GM12878 (cell line): ENCODE measurements at regions of chr2 and their contacts with region 1.

Region 1: GRCh38 chr2:130873700-130874346 is 37.1 kb downstream of the ARHGEF4 start:
- DNase-seq: peak; percentile 17
- ATAC-seq: peak; percentile 87
- H3K4me3 ChIP-seq: no peak overlapping the region
- H3K27ac ChIP-seq: no peak overlapping the region
- H3K4me1 ChIP-seq: no peaks in the 10 kb centered on the region
- H3K27me3 ChIP-seq: no peaks in the 10 kb centered on the region; a peak in 2 of 4 replicates
- CTCF ChIP-seq: peak; percentile 70 to 83 (median 78); a peak in 5 of 6 replicates
- EP300 ChIP-seq: no peak
- POLR2A ChIP-seq: no peak
- RAD21 ChIP-seq: peak; percentile 73

Region 2: DNA sequence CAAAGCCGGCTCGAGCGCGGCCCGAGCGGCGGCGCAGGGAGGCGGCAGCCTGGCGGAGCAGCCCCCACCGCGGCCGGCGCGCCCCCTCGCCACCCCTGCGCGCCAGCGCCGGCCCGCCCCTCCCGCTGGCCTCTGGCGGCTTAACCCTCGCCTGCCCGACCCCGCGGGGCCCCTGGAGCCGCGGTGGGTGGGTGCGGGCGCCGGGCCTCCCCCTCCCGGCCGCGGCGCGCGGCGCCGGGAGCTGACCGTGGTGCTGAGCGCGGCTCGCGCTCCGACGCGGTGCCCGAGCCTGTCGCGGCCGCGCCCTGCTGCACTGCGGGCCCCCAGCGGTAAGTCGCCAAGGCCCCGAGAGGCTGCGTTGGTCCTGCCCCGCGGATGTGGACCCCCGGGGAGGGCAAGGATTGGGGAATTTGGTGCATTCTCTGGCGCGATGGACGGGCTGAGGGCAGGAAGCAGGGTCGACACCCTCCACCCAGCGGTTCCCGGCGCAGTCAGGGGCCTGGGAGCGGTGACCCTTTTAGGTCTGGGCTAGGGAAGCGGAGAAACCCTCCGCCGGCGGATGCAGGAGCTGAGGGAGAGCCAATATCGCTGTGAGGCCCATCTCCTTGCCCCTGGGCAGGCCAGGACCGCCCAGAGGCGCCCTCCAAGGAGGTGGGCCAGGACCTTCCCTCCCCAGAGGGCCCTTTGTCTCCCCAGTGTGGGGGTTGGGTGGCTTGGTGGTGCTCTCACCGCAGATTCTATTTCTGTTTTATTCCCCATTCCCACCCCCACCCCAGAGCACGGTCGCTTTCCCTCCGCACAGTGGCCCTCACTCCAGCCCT is 117.6 kb before region 1 on chr2:
- CTCF ChIA-PET with region 1: no interaction called
- POLR2A ChIA-PET with region 1: no interaction called
- RAD21 ChIA-PET with region 1: no interaction called
- SMC1A ChIA-PET with region 1: no interaction called
- in situ Hi-C with region 1: no loop called
- intact Hi-C with region 1: no loop called
- DNase-seq: no peak
- ATAC-seq: peak; percentile 72
- H3K4me3 ChIP-seq: no peak overlapping the region
- H3K27ac ChIP-seq: no peak overlapping the region
- H3K4me1 ChIP-seq: no peaks in the 10 kb centered on the region
- H3K27me3 ChIP-seq: peaks cover 3 to 5% of the 10 kb centered on the region in 2 experiments
- CTCF ChIP-seq: no peak
- EP300 ChIP-seq: no peak
- POLR2A ChIP-seq: no peak
- RAD21 ChIP-seq: no peak

Region 3: DNA sequence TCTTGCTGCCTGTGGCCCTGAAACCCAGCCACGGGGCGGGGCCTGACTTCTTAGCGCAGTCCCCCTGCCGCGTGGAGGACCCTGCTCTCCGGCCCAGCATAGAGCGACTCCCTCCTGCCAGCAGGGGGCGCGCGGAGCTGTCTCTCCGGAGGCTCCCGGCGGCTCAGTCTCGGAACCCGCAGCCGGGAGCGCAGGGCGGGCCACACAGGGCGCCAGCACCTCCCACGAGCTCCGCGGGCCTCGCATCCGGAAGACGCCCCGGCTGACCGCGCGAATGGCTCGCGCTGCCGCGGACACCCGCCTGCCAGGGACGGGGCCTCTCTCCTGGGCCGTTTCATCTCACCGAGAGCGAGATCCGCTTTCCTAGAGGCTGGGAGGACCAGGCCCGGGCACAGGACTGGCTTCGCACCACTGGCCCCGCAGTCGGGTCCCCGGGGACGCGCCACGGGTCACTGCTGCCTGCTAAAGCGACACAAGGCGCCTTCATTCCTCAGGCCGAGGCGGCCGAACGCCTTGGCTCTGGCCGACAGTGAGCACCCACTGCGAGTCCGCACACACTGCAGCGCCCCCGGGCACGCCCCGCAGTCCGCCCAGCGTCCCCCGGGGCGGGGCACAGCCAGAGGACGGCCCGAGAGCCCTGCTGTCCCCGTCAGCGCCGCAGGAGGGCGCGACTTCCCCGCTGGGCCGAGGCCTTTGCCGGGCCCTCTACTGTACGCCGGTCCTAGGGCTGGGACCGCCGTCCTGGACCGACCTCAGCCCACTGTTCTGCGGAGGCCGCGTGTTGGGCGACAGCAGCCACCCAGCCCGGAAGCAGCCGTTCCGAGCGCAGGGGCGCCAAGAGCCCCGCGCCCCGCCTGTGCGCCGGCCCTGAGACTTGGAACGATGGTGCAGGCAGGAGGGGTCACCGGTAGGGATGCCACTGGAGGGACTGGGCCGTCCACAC is 76.1 kb before region 1 on chr2:
- CTCF ChIA-PET with region 1: interaction called, 265 read pairs
- POLR2A ChIA-PET with region 1: interaction called, 9 read pairs
- RAD21 ChIA-PET with region 1: interaction called, 60 read pairs
- SMC1A ChIA-PET with region 1: interaction called, 41 read pairs
- in situ Hi-C with region 1: loop called (anchors 5 kb)
- intact Hi-C with region 1: loop called (anchors 1 kb)
- DNase-seq: peak; percentile 19
- ATAC-seq: peak; percentile 94
- H3K4me3 ChIP-seq: peak overlapping the region; percentile 71
- H3K27ac ChIP-seq: peak overlapping the region; percentile 59
- H3K4me1 ChIP-seq: no peaks in the 10 kb centered on the region
- H3K27me3 ChIP-seq: no peaks in the 10 kb centered on the region
- CTCF ChIP-seq: peak; percentile 84 to 97 (median 95); a peak in 5 of 6 replicates
- EP300 ChIP-seq: no peak
- POLR2A ChIP-seq: peak; percentile 65
- RAD21 ChIP-seq: peak; percentile 83

Region 4: DNA sequence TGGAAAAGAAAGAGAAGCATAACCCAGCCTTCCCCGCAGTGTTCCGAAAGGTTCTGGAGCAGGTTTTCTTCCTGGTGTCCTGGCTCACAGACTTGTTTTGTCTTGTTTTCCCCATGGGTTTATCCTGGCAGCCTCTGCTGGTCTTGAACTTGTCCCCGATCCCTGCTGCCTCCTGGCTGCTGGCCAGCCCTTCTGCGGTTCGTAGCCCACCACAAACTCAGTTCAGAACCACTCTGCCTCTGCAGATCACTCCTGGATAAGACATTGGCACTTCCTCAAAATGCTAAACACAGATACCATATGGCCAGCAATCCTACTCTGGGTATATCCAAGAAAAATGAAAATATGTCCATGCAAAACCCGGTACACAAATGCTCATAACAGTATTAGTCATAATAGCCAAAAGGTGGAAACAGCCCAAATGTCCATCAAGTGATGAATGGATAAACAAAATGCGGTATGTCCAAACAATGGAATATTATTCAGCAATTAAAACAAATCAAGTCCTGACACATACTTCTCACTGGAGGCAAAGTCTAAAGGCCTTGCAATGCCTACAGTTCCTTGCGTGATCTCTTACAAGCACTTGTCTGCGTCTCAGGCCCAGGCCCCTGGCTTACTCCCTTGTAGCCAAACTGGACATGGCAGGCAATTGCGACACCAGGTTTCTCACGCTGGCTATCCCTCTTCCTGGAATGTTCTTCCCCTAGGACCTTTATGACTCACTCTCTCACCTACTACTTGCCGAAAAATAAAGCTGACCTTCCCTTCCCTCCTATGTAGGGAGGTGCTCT is 65.1 kb before region 1 on chr2:
- CTCF ChIA-PET with region 1: interaction called, 265 read pairs
- POLR2A ChIA-PET with region 1: no interaction called
- RAD21 ChIA-PET with region 1: interaction called, 3 read pairs
- SMC1A ChIA-PET with region 1: no interaction called
- in situ Hi-C with region 1: loop called (anchors 5 kb)
- intact Hi-C with region 1: no loop called
- DNase-seq: no peak
- ATAC-seq: no peak
- H3K4me3 ChIP-seq: no peak overlapping the region
- H3K27ac ChIP-seq: no peak overlapping the region
- H3K4me1 ChIP-seq: no peaks in the 10 kb centered on the region
- H3K27me3 ChIP-seq: no peaks in the 10 kb centered on the region
- CTCF ChIP-seq: no peak
- EP300 ChIP-seq: no peak
- POLR2A ChIP-seq: no peak
- RAD21 ChIP-seq: no peak

Region 5: DNA sequence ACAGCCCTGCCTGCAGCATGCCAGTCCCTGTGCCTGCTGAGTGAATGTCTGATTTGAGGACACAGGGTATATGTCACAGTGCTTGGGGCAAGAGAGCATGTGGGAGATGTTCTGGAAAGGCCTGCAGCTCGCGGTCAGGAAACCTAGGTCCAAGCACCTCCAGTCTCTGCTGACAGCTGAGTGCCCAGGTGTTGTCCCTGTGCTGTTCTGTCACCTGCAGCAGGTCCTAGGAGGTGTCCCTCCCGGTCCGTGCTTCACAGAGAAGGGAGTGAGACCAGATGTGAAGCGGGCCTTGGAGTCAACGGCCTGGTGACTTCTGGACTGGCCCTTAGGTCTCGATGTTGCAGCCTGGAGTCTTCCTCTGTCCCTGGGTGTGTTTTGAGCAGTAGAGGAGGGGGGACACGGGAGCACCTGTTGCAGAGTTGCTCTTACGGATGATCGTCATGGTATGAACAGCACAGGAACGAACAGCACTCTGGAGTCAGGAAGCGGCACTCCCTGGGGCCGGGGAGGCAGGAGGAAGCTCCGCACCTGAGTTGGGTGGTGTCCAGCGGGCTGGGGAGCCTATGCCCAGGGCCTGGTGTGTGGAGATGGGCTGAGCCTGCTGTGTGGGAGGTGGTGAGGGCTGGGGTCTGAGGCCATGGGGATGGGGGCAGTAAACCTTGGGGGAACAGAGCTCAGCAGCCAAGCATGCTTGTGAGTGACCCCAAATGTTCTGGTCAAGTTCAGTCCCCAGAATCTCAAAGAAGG is 58.7 kb before region 1 on chr2:
- CTCF ChIA-PET with region 1: interaction called, 33 read pairs
- POLR2A ChIA-PET with region 1: no interaction called
- RAD21 ChIA-PET with region 1: interaction called, 11 read pairs
- SMC1A ChIA-PET with region 1: interaction called, 4 read pairs
- in situ Hi-C with region 1: no loop called
- intact Hi-C with region 1: no loop called
- DNase-seq: no peak
- ATAC-seq: no peak
- H3K4me3 ChIP-seq: no peak overlapping the region
- H3K27ac ChIP-seq: no peak overlapping the region
- H3K4me1 ChIP-seq: no peaks in the 10 kb centered on the region
- H3K27me3 ChIP-seq: no peaks in the 10 kb centered on the region
- CTCF ChIP-seq: no peak
- EP300 ChIP-seq: no peak
- POLR2A ChIP-seq: no peak
- RAD21 ChIP-seq: no peak

Region 6: GRCh38 chr2:130824492-130825061 is 49.2 kb before region 1 on chr2:
- CTCF ChIA-PET with region 1: interaction called, 33 read pairs
- POLR2A ChIA-PET with region 1: no interaction called
- RAD21 ChIA-PET with region 1: interaction called, 18 read pairs
- SMC1A ChIA-PET with region 1: interaction called, 14 read pairs
- in situ Hi-C with region 1: no loop called
- intact Hi-C with region 1: loop called (anchors 2 kb)
- DNase-seq: peak; percentile 86
- ATAC-seq: peak; percentile 81
- H3K4me3 ChIP-seq: no peak overlapping the region
- H3K27ac ChIP-seq: no peak overlapping the region
- H3K4me1 ChIP-seq: peaks cover 15% of the 10 kb centered on the region
- H3K27me3 ChIP-seq: no peaks in the 10 kb centered on the region
- CTCF ChIP-seq: no peak
- EP300 ChIP-seq: peak in 1 of 2 experiments; percentile 85; a peak in 2 of 4 replicates
- POLR2A ChIP-seq: no peak
- RAD21 ChIP-seq: no peak

Region 7: DNA sequence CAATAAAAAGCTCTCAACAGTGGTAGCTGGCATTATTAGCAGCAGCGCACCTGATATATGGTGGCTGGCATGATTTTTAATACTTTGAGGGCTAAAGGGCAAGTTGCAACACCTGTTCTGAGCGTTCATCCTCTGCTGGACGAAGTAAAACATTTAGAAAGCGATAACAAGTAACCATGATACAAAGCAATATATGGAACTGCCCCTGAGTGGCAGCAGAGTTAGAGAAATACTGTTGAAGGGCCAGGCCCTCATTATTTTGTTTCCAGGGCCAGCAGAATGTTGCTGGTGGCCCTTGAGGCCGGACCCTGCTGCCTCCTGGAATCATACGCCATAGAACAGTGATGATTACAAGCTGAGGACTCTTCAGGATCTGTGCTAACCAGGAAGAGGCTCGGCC is 10.7 kb after region 1 on chr2:
- CTCF ChIA-PET with region 1: interaction called, 22 read pairs
- POLR2A ChIA-PET with region 1: no interaction called
- RAD21 ChIA-PET with region 1: interaction called, 4 read pairs
- SMC1A ChIA-PET with region 1: interaction called, 5 read pairs
- in situ Hi-C with region 1: no loop called
- intact Hi-C with region 1: no loop called
- DNase-seq: no peak
- ATAC-seq: no peak
- H3K4me3 ChIP-seq: no peak overlapping the region
- H3K27ac ChIP-seq: no peak overlapping the region
- H3K4me1 ChIP-seq: no peaks in the 10 kb centered on the region
- H3K27me3 ChIP-seq: no peaks in the 10 kb centered on the region; a peak in 1 of 4 replicates
- CTCF ChIP-seq: 0 out of 6 replicates have a peak, but pooled peaks of 1 of the 3 experiments have one; percentile 1
- EP300 ChIP-seq: no peak
- POLR2A ChIP-seq: no peak
- RAD21 ChIP-seq: no peak

Region 8: GRCh38 chr2:130933504-130933903 is 59.7 kb after region 1 on chr2:
- CTCF ChIA-PET with region 1: no interaction called
- POLR2A ChIA-PET with region 1: no interaction called
- RAD21 ChIA-PET with region 1: no interaction called
- SMC1A ChIA-PET with region 1: no interaction called
- in situ Hi-C with region 1: no loop called
- intact Hi-C with region 1: no loop called
- DNase-seq: no peak
- ATAC-seq: no peak
- H3K4me3 ChIP-seq: no peak overlapping the region
- H3K27ac ChIP-seq: no peak overlapping the region
- H3K4me1 ChIP-seq: no peaks in the 10 kb centered on the region
- H3K27me3 ChIP-seq: no peaks in the 10 kb centered on the region
- CTCF ChIP-seq: no peak
- EP300 ChIP-seq: no peak
- POLR2A ChIP-seq: no peak
- RAD21 ChIP-seq: no peak